Activated naive CD4-positive, alpha-beta T cell treated with anti-CD3 and anti-CD28 coated beads for 36 hours (primary cell): ENCODE measurements at regions of chrX and their contacts with region 1.

Region 1: DNA sequence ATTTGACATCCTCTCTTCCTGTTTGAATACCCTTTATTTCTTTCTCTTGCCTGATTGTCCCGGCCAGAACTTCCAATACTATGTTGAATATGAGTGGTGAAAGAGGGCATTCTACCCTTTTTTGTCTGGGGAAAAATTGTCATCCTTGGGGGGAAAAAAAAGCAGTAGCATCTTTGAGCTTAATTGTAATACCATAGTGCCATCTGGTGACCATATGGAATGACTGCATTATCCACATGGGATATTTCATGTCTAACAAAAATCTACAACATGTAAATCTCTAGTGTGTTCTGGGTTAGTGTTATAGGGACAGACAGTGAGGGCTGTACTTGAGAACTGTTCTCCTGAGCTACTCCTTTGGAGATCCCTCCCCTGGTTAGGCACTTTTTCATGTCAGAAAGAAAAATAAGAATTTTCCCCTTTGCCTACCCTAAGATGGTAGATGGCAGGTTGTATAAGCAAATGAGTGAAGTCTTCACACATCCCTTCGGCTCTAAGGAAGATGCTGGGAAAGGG is 26.0 kb downstream of the CAPN6 start:
- DNase-seq: no peak
- H3K4me3 Mint-ChIP-seq: no peak overlapping the region
- H3K27ac Mint-ChIP-seq: no peak overlapping the region
- H3K4me1 Mint-ChIP-seq: no peaks in the 10 kb centered on the region
- H3K27me3 Mint-ChIP-seq: peaks cover 4% of the 10 kb centered on the region

Region 2: DNA sequence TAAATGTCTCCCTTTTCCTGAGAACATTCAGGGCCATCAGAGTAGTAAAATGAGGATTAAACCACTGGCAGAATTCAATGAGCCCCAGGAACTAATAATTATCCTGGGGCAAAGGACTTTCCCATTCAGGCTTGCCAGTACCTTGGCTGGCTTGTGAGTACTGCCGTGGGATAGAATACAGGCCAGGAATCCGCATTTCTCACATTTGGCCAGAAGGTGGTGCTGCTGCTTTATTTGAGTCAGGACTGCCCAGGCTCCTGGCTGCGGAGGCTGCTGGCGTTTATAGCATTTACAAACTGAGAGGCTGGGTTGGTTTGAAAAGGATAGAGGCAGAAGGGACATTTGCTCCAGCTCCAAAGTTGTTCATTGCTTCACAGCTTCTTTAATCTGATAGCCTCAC is 794.2 kb before region 1 on chrX:
- CTCF ChIA-PET with region 1: no interaction called
- intact Hi-C with region 1: loop called (anchors 5 kb)
- DNase-seq: peak; percentile 68
- H3K4me3 Mint-ChIP-seq: no peak overlapping the region
- H3K27ac Mint-ChIP-seq: no peak overlapping the region
- H3K4me1 Mint-ChIP-seq: no peaks in the 10 kb centered on the region
- H3K27me3 Mint-ChIP-seq: peaks cover 4% of the 10 kb centered on the region

Region 3: GRCh38 chrX:110853610-110854009 is 390.7 kb before region 1 on chrX:
- CTCF ChIA-PET with region 1: interaction called, 3 read pairs
- intact Hi-C with region 1: loop called (anchors 2 kb)
- DNase-seq: no peak
- H3K4me3 Mint-ChIP-seq: no peak overlapping the region
- H3K27ac Mint-ChIP-seq: no peak overlapping the region
- H3K4me1 Mint-ChIP-seq: no peaks in the 10 kb centered on the region
- H3K27me3 Mint-ChIP-seq: peaks cover 2% of the 10 kb centered on the region

Region 4: DNA sequence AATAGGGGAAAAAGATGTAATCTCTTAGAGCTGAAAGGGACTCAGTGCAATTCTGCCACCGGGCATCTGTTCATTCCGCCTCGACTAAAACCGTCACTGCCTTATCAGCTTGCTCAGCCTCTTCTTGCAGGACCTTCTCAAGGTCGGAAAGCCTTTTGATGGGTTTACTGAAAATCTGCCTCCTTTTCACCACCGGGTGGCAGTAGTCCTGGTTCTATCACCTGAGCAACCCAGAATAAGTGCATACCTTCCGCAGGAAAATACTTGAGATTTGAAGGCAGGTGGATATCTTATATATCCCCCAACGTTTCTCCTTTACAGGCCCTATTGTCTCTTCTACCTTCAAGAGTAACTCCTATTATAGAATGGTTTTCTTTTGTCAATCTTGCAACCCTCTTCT is 251.7 kb before region 1 on chrX:
- CTCF ChIA-PET with region 1: no interaction called
- intact Hi-C with region 1: loop called (anchors 5 kb)
- DNase-seq: peak; percentile 19
- H3K4me3 Mint-ChIP-seq: no peak overlapping the region
- H3K27ac Mint-ChIP-seq: no peak overlapping the region
- H3K4me1 Mint-ChIP-seq: no peaks in the 10 kb centered on the region
- H3K27me3 Mint-ChIP-seq: peaks cover 1% of the 10 kb centered on the region

Region 5: DNA sequence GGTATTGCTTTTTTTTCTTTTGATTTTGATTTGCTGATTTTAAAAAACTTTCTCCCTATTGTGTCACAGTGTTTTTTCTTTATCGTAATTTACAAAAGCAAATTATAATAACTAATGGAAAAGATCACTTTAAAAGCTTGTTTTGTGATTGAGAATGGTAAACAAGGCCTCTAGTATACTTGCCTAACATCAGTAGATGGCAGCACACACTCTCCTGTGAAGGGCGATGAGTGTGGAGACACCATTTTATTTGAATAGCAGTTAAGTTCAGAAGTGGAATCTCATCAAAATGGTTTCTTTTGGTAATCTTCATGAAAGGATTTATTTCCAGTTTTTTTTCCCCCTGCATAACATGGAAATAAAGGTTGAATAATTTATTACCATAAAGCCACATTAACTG is 76.0 kb before region 1 on chrX:
- CTCF ChIA-PET with region 1: interaction called, 3 read pairs
- intact Hi-C with region 1: loop called (anchors 1 kb)
- DNase-seq: peak; percentile 16
- H3K4me3 Mint-ChIP-seq: no peak overlapping the region
- H3K27ac Mint-ChIP-seq: no peak overlapping the region
- H3K4me1 Mint-ChIP-seq: no peaks in the 10 kb centered on the region
- H3K27me3 Mint-ChIP-seq: no peaks in the 10 kb centered on the region